Caco-2 (cell line): ENCODE measurements at regions of chr7 and their contacts with region 1.

Region 1: GRCh38 chr7:155380221-155380861 is 77.6 kb upstream of the EN2 start:
- DNase-seq: peak; percentile 84
- H3K4me3 ChIP-seq: no peak overlapping the region
- H3K4me3 Mint-ChIP-seq: peak overlapping the region; percentile 2
- H3K27ac Mint-ChIP-seq: no peak overlapping the region
- H3K4me1 ChIP-seq: peaks cover 22% of the 10 kb centered on the region; the same call in 1 of the 2 replicates
- H3K4me1 Mint-ChIP-seq: no peaks in the 10 kb centered on the region
- H3K27me3 ChIP-seq: no peaks in the 10 kb centered on the region; the same call in 1 of the 2 replicates
- H3K27me3 Mint-ChIP-seq: peaks cover 28% of the 10 kb centered on the region
- CTCF ChIP-seq: peak; percentile 90 to 91

Region 2: DNA sequence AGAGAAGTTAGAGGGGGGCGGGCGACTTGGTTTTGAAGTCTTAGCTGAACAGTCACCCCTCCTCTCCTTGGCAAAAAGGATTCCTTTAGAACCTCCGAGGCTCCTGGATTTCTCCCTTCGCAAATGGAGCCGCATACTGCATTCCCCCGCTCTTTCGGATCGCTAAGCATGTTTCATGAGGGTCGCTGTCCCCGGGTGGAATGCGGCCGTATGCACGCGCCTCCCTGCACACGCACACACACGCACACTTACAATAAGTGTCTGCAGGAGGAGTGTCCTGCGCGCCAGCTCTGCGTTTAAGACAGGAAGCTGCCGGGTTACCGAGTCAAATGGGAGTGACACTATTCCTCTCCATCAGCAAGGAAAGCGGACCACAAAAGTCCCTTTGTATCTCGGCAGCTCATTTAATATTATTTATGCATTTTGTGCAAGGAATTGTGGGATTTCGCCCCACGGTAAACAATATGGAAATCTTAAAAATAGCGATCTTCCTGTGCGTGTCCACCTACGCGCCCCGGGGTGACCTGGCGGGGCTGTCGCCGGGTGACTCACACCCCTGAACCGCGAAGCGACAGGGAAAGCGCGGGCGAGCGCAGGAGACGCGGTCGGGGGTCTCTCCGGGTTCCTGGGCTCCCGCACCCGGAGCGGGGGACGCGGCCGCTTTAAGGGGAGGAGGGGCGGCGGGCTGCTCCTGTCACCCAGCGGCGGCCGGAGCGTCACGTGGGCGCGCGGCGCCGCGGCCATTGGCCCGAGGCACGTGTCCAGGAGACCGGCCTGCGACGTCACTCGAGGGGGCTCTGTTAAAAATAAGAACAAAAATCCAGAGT is 76.6 kb after region 1 on chr7:
- CTCF ChIA-PET with region 1: no interaction called
- POLR2A ChIA-PET with region 1: no interaction called
- intact Hi-C with region 1: loop called (anchors 5 kb)
- DNase-seq: peak; percentile 85 to 88
- H3K4me3 ChIP-seq: peak overlapping the region; percentile 89
- H3K4me3 Mint-ChIP-seq: peak overlapping the region; percentile 82
- H3K27ac Mint-ChIP-seq: peak overlapping the region; percentile 81
- H3K4me1 ChIP-seq: peaks cover 8% of the 10 kb centered on the region
- H3K4me1 Mint-ChIP-seq: peaks cover 7% of the 10 kb centered on the region
- H3K27me3 ChIP-seq: peaks cover 1% of the 10 kb centered on the region
- H3K27me3 Mint-ChIP-seq: peaks cover 18% of the 10 kb centered on the region
- CTCF ChIP-seq: no peak

Region 3: DNA sequence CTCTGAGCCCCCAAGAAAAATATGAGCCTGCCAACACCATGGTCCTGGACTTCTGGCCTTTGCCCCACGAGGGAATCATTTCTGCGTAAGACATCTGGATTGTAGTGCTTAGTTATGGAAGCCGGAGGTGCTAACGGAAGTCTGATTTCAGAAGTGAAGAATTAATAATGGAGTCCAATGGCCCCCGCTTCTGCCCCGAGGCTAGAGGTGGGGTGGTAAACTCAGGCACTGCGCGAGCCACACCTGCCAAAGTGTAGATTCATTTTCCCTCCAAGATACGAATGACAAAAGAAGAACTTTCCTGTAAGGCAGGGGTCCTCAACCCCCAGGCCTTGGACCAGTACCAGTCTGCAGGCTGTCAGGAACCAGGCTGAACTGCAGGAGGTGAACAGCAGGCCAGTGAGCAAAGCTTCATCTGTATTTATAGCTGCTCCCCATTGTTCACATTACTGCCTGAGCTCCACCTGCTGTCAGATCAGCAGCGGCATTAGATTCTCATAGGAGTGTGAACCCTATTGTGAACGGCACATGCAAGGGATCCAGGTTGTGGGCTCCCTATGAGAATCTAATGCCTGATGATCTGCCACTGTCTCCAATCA is 143.8 kb after region 1 on chr7:
- CTCF ChIA-PET with region 1: interaction called, 4 read pairs
- POLR2A ChIA-PET with region 1: no interaction called
- intact Hi-C with region 1: loop called (anchors 1 kb)
- DNase-seq: no peak
- H3K4me3 ChIP-seq: no peak overlapping the region
- H3K4me3 Mint-ChIP-seq: no peak overlapping the region
- H3K27ac Mint-ChIP-seq: no peak overlapping the region
- H3K4me1 ChIP-seq: no peaks in the 10 kb centered on the region
- H3K4me1 Mint-ChIP-seq: no peaks in the 10 kb centered on the region
- H3K27me3 ChIP-seq: no peaks in the 10 kb centered on the region
- H3K27me3 Mint-ChIP-seq: peaks cover 2% of the 10 kb centered on the region
- CTCF ChIP-seq: no peak

Region 4: GRCh38 chr7:155738652-155739537 is 358.6 kb after region 1 on chr7:
- CTCF ChIA-PET with region 1: no interaction called
- POLR2A ChIA-PET with region 1: no interaction called
- intact Hi-C with region 1: loop called (anchors 1 kb)
- DNase-seq: peak; percentile 77 to 79
- H3K4me3 ChIP-seq: no peak overlapping the region
- H3K4me3 Mint-ChIP-seq: no peak overlapping the region
- H3K27ac Mint-ChIP-seq: no peak overlapping the region
- H3K4me1 ChIP-seq: no peaks in the 10 kb centered on the region
- H3K4me1 Mint-ChIP-seq: no peaks in the 10 kb centered on the region
- H3K27me3 ChIP-seq: no peaks in the 10 kb centered on the region
- H3K27me3 Mint-ChIP-seq: no peaks in the 10 kb centered on the region
- CTCF ChIP-seq: peak; percentile 76 to 82

Region 5: GRCh38 chr7:155763691-155764437 is 383.5 kb after region 1 on chr7:
- CTCF ChIA-PET with region 1: no interaction called
- POLR2A ChIA-PET with region 1: no interaction called
- intact Hi-C with region 1: loop called (anchors 1 kb)
- DNase-seq: no peak
- H3K4me3 ChIP-seq: no peak overlapping the region
- H3K4me3 Mint-ChIP-seq: no peak overlapping the region
- H3K27ac Mint-ChIP-seq: peak overlapping the region; percentile 13
- H3K4me1 ChIP-seq: no peaks in the 10 kb centered on the region
- H3K4me1 Mint-ChIP-seq: peaks cover 6% of the 10 kb centered on the region
- H3K27me3 ChIP-seq: no peaks in the 10 kb centered on the region
- H3K27me3 Mint-ChIP-seq: no peaks in the 10 kb centered on the region
- CTCF ChIP-seq: no peak

Region 6: GRCh38 chr7:155774947-155775346 is 394.6 kb after region 1 on chr7:
- CTCF ChIA-PET with region 1: no interaction called
- POLR2A ChIA-PET with region 1: no interaction called
- intact Hi-C with region 1: no loop called
- DNase-seq: no peak
- H3K4me3 ChIP-seq: no peak overlapping the region
- H3K4me3 Mint-ChIP-seq: no peak overlapping the region
- H3K27ac Mint-ChIP-seq: no peak overlapping the region
- H3K4me1 ChIP-seq: peaks cover 20% of the 10 kb centered on the region
- H3K4me1 Mint-ChIP-seq: peaks cover 11% of the 10 kb centered on the region
- H3K27me3 ChIP-seq: no peaks in the 10 kb centered on the region
- H3K27me3 Mint-ChIP-seq: no peaks in the 10 kb centered on the region
- CTCF ChIP-seq: no peak